ENCODE measurements at regions of chr11 and their contacts with region 1.

Region 1: GRCh38 chr11:33742249-33742851 is 6.1 kb upstream of the CD59 start:
- DNase-seq: no peak
- H3K4me3 Mint-ChIP-seq: no peak overlapping the region
- H3K27ac Mint-ChIP-seq: no peak overlapping the region
- H3K4me1 Mint-ChIP-seq: peaks cover 3% of the 10 kb centered on the region
- H3K27me3 Mint-ChIP-seq: peaks cover 12% of the 10 kb centered on the region

Region 2: GRCh38 chr11:33362051-33362910 is 380.1 kb before region 1 on chr11:
- intact Hi-C with region 1: loop called (anchors 1 kb)
- DNase-seq: no peak
- H3K4me3 Mint-ChIP-seq: no peak overlapping the region
- H3K27ac Mint-ChIP-seq: no peak overlapping the region
- H3K4me1 Mint-ChIP-seq: peaks cover 2% of the 10 kb centered on the region
- H3K27me3 Mint-ChIP-seq: peaks cover 21% of the 10 kb centered on the region

Region 3: DNA sequence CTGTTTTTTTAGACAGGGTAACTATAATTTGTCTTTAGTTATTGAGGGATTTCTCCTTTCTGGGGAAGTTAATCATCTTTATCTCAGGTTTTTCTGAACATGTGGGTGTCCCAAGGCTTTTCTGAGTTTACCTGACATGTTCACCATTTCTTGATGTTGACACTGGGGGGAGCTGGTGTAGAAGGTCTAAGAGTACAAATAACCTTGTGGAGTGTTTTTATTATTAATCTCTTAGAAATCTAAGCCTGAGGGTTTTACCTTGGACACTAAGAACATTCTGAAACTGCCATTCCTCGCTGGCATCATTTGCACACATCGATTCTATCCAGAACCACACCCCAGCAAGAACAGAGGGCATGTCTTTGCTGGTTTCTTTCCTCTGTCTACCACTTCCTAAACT is 26.1 kb before region 1 on chr11:
- intact Hi-C with region 1: loop called (anchors 1 kb)
- DNase-seq: no peak
- H3K4me3 Mint-ChIP-seq: no peak overlapping the region
- H3K27ac Mint-ChIP-seq: no peak overlapping the region
- H3K4me1 Mint-ChIP-seq: peaks cover 14% of the 10 kb centered on the region
- H3K27me3 Mint-ChIP-seq: no peaks in the 10 kb centered on the region

Measured in activated T-helper 2 cell treated with anti-CD3 and anti-CD28 coated beads, Interferon-gamma antibody, Interleukin-2, Interleukin-4, amounts not matched to agents 10 μg/mL and 5 μg/mL and 100 μg/mL, durations not matched to agents 14 hours and 24 hours and 36 hours (primary cell).